Endothelial cell of umbilical vein (primary cell): ENCODE measurements at regions of chr6 and their contacts with region 1.

Region 1: GRCh38 chr6:116561377-116562018 is 7.9 kb downstream of the CALHM4 start:
- DNase-seq: peak; percentile 84
- H3K4me3 ChIP-seq: no peak overlapping the region
- H3K27ac ChIP-seq: no peak overlapping the region
- H3K4me1 ChIP-seq: peaks cover 6% of the 10 kb centered on the region
- H3K27me3 ChIP-seq: no peaks in the 10 kb centered on the region
- CTCF ChIP-seq: peak; percentile 79 to 84
- POLR2A ChIP-seq: no peak

Region 2: DNA sequence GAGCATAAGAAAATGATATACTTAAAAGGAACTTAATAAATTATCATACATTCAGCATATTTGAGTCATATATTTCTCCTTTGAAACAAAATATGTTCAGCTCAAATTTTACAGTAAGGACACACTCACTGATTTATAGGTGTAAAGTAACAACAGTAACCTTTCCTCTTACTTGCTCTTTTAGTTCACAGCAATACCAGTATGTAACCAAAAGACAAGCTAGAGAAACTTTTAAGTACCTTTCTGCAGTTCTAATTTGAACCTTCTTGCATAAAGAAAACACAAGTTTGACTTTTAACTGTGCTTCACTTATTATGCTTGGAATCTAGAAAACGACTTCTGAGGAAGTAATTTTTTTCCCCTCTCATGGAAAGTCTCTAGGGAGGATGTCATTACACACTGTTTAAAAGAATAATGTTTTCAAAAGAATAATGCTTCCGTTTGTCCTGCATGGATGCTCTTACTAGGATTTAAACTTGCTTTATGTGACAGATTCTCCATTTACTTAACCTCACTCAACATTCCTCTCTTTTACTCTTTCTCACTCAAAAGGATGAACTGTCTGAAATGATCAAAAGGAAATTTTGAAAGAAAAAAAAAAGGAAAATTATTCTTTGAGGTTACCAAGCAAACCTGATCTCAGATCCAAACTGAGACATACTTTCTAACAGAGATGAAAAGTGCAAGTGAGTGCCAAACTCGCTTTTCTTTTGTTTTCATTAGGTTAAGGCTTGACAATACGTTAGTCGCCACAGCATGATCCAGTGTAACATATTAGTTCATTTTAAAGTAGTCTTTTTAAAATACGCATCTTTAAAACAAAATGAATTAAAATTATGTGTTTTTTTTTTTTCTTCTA is 122.7 kb before region 1 on chr6:
- CTCF ChIA-PET with region 1: no interaction called
- POLR2A ChIA-PET with region 1: no interaction called
- dilution Hi-C with region 1: no loop called
- intact Hi-C with region 1: no loop called
- DNase-seq: peak; percentile 25
- H3K4me3 ChIP-seq: no peak overlapping the region
- H3K27ac ChIP-seq: no peak overlapping the region
- H3K4me1 ChIP-seq: no peaks in the 10 kb centered on the region
- H3K27me3 ChIP-seq: no peaks in the 10 kb centered on the region
- CTCF ChIP-seq: no peak
- POLR2A ChIP-seq: no peak

Region 3: DNA sequence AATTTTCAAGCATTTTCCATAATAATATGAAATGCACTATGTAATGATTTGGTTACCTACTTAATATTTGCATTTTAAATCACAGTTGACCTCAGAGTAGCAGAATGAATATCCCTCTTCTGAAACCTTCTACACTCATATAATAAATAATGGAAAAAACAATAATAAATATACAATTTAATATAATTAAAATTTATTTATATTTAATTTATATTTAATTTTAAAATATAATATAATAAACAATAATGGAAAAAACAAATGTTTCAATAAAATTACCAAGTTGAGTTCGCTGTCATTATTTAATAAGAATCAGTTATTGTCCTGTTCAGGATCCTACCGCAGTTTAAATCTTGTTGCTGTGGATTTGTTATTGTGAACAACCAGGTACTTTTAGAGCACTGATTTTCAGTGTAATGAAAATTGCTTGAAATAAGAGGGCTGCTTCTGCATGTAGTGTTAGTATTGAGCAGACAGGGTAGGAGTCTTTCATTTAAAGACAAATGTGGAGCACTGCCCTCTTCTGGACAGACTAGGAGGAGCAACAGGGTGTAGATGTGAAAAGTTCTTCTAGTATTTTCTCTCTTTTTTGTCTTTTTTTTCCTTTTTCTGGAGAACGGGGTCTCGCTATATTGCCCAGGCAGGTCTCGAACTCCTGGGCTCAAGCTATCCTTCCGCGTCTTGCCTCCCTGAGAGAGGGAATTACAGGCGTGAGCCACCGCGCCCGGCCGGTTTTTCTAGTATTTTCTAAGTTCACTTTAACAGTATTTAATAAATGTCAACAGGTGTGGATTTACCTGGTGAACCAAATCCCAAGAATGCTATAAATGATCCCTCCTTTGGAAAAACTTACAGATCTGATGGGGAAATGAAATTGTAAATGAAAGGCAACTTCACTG is 29.6 kb before region 1 on chr6:
- CTCF ChIA-PET with region 1: interaction called, 103 read pairs
- POLR2A ChIA-PET with region 1: no interaction called
- dilution Hi-C with region 1: no loop called
- intact Hi-C with region 1: loop called (anchors 1 kb)
- DNase-seq: peak; percentile 86
- H3K4me3 ChIP-seq: no peak overlapping the region
- H3K27ac ChIP-seq: no peak overlapping the region
- H3K4me1 ChIP-seq: peaks cover 16% of the 10 kb centered on the region
- H3K27me3 ChIP-seq: peaks cover 0 to 2% of the 10 kb centered on the region in 2 experiments
- CTCF ChIP-seq: peak; percentile 59 to 74
- POLR2A ChIP-seq: no peak

Region 4: GRCh38 chr6:116542426-116542825 is 19.1 kb before region 1 on chr6:
- CTCF ChIA-PET with region 1: interaction called, 73 read pairs
- POLR2A ChIA-PET with region 1: no interaction called
- dilution Hi-C with region 1: no loop called
- intact Hi-C with region 1: no loop called
- DNase-seq: no peak
- H3K4me3 ChIP-seq: no peak overlapping the region
- H3K27ac ChIP-seq: no peak overlapping the region
- H3K4me1 ChIP-seq: no peaks in the 10 kb centered on the region
- H3K27me3 ChIP-seq: no peaks in the 10 kb centered on the region
- CTCF ChIP-seq: no peak
- POLR2A ChIP-seq: no peak

Region 5: GRCh38 chr6:116847227-116847626 is 285.7 kb after region 1 on chr6:
- CTCF ChIA-PET with region 1: interaction called, 7 read pairs
- POLR2A ChIA-PET with region 1: no interaction called
- dilution Hi-C with region 1: no loop called
- intact Hi-C with region 1: loop called (anchors 5 kb)
- DNase-seq: peak; percentile 36
- H3K4me3 ChIP-seq: no peak overlapping the region
- H3K27ac ChIP-seq: no peak overlapping the region
- H3K4me1 ChIP-seq: no peaks in the 10 kb centered on the region
- H3K27me3 ChIP-seq: no peaks in the 10 kb centered on the region
- CTCF ChIP-seq: peak in 1 of 2 donors; percentile 7
- POLR2A ChIP-seq: no peak

Region 6: DNA sequence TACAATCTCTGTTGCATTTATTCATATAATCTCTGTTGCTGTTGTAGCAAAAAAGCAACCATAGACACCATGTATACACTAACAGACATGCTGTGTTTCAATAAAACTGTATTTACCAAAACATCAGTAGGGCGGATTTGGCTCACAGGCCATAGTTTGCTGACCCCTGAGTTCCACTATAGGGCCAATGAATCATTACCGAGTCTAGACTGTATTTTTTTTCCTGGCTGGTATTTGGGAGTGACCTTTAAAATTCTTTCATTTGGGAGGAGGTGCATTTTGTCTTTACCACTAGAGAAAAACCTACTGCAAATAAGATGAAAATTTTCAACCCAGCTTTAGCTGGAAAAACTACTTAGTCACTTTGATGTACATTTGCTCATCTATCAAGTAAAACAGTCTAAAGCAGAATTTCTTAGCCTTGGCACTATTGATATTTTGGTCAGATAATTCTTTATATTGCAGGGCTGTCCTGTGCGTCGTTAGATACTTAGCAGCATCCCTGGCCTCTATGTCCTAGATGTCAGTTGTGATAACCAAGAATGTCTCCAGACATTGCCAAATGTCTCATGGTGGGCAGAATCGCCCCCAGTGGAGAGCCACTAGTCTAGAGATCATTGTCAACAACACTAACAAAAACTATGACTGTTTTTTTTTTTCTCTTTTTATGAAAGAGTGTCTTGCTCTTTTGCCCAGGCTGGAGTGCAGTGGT is 960.4 kb after region 1 on chr6:
- CTCF ChIA-PET with region 1: no interaction called
- POLR2A ChIA-PET with region 1: no interaction called
- dilution Hi-C with region 1: no loop called
- intact Hi-C with region 1: no loop called
- DNase-seq: peak; percentile 47
- H3K4me3 ChIP-seq: no peak overlapping the region
- H3K27ac ChIP-seq: peak overlapping the region; percentile 32
- H3K4me1 ChIP-seq: peaks cover 22% of the 10 kb centered on the region
- H3K27me3 ChIP-seq: no peaks in the 10 kb centered on the region
- CTCF ChIP-seq: no peak
- POLR2A ChIP-seq: no peak